ENCODE measurements at regions of chr13 and their contacts with region 1.

Region 1: DNA sequence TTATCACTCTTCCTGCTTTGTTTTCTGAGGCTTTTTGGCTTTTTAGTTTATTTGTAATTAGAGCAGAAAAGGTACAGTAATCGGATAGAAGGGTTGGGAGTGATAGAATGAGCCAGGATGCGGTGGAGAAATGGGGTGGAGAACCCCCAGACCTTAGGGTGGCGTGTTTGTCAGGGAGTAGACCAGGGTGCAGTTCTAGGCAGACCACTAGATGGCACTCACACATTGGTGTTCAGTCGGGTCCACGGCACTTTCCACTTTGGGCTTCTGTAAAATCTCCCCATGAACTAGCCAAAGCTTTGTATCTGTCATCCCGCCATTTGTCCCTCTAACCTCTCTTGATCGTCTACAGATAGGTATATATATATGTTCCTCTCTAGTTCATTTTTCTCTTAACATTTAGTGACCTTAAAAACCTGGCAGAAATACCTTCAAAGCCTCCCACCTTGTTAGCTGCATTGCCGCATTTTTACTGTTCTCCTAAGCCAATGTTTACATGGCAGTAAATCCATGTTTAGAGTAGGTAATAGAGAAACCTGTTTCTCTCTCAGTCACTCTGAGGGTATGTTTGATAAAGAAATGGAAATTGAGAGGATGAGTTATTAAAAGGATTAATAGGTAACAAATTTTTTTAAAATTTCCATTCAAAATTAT is 154.9 kb downstream of the TM9SF2 start:
- DNase-seq: no peak
- H3K4me3 ChIP-seq: no peak overlapping the region
- H3K27me3 ChIP-seq: peaks cover 3% of the 10 kb centered on the region; the same call in 1 of the 2 replicates
- CTCF ChIP-seq: peak; percentile 94

Region 2: GRCh38 chr13:99671746-99672145 is 15.5 kb after region 1 on chr13:
- CTCF ChIA-PET with region 1: interaction called, 27 read pairs
- POLR2A ChIA-PET with region 1: no interaction called
- DNase-seq: no peak
- H3K4me3 ChIP-seq: no peak overlapping the region
- H3K27me3 ChIP-seq: peaks cover 2% of the 10 kb centered on the region; the same call in 1 of the 2 replicates
- CTCF ChIP-seq: no peak

Measured in BJ (cell line).